ENCODE measurements at regions of chr17 and their contacts with region 1.

Region 1: GRCh38 chr17:60435244-60436167 is 13.2 kb downstream of the CHCT1 start:
- DNase-seq: peak; percentile 21 to 71 (median 59)
- ATAC-seq: peak; percentile 86
- H3K4me3 ChIP-seq: no peak overlapping the region
- H3K4me3 Mint-ChIP-seq: no peak overlapping the region
- H3K27ac ChIP-seq: no peak overlapping the region
- H3K27ac Mint-ChIP-seq: peak overlapping the region in 1 of 9 donors; percentile 29
- H3K4me1 ChIP-seq: no peaks in the 10 kb centered on the region
- H3K4me1 Mint-ChIP-seq: peaks cover 0 to 4% (median 0%) of the 10 kb centered on the region in 7 donors
- H3K27me3 ChIP-seq: no peaks in the 10 kb centered on the region
- H3K27me3 Mint-ChIP-seq: peaks cover 0 to 7% (median 4%) of the 10 kb centered on the region in 5 donors

Region 2: GRCh38 chr17:60036796-60037612 is 398.5 kb before region 1 on chr17:
- CTCF ChIA-PET with region 1: interaction called, 4 read pairs
- POLR2A ChIA-PET with region 1: no interaction called
- intact Hi-C with region 1: loop called in 1 of 2 experiments (anchors 5 kb)
- DNase-seq: peak; percentile 45 to 71 (median 65)
- ATAC-seq: peak; percentile 96
- H3K4me3 ChIP-seq: no peak overlapping the region
- H3K4me3 Mint-ChIP-seq: peak overlapping the region in 1 of 10 donors; percentile 5
- H3K27ac ChIP-seq: no peak overlapping the region
- H3K27ac Mint-ChIP-seq: no peak overlapping the region
- H3K4me1 ChIP-seq: peaks cover 0 to 4% of the 10 kb centered on the region in 2 donors
- H3K4me1 Mint-ChIP-seq: peaks cover 0 to 8% (median 5%) of the 10 kb centered on the region in 7 donors
- H3K27me3 ChIP-seq: no peaks in the 10 kb centered on the region
- H3K27me3 Mint-ChIP-seq: peaks cover 16 to 24% (median 19%) of the 10 kb centered on the region in 5 donors

Region 3: DNA sequence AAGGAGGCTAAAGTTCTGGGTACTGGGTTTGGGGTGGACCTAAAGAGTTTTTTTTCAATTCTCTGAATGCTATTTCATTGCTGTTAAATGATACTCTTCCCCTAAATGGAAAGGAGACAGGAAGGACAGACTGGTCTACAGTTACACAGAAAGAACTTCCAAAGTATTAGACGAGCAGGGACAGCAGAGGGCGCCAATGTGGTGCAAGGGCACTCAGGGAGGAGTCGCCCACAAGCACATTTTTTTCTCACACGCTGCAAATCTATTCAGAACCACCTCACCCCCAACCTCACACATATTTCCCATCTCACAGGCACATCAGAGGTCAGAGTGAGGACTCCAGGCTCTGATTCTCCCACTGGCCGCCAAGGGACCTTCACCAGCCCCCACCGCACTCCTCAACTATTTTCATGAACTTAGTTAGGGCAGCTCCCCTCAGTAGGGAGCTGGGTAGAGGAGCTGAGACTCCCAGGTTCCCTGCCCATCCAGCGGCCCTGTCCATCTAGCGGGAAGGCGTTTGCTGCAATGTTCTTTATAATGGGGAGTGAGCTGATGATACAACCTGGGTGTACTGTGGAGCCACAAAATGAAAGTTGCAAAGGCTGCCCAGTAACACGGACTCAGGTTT is 292.5 kb before region 1 on chr17:
- CTCF ChIA-PET with region 1: interaction called, 4 read pairs
- POLR2A ChIA-PET with region 1: no interaction called
- intact Hi-C with region 1: loop called (anchors 1 kb)
- DNase-seq: peak; percentile 31 to 74 (median 62)
- ATAC-seq: peak; percentile 81
- H3K4me3 ChIP-seq: no peak overlapping the region
- H3K4me3 Mint-ChIP-seq: peak overlapping the region in 4 of 10 donors; percentile 25 to 49 (median 34)
- H3K27ac ChIP-seq: no peak overlapping the region
- H3K27ac Mint-ChIP-seq: no peak overlapping the region
- H3K4me1 ChIP-seq: peaks cover 0 to 5% of the 10 kb centered on the region in 2 donors
- H3K4me1 Mint-ChIP-seq: peaks cover 0 to 33% (median 23%) of the 10 kb centered on the region in 7 donors
- H3K27me3 ChIP-seq: peaks cover 8 to 23% of the 10 kb centered on the region in 2 donors
- H3K27me3 Mint-ChIP-seq: peaks cover 75 to 96% (median 80%) of the 10 kb centered on the region in 5 donors

Region 4: DNA sequence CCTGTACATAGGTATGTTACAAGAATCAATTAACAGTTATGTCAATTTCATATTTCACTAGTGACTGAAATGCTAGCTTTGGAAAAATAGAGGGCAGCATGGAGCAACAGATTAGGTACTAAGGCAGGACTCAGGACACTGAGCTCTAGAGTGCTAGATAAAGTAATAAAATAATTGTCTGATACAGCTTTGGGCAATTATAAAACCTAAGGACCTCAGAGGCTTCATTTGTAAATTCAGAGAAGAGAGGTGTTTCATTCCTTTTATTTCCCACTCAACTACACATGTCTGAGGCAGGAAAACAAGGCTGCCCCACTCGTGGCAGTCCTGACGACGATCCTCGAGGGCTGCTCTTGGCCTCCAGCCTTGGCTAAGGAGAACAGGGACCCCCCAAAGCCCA is 204.3 kb before region 1 on chr17:
- CTCF ChIA-PET with region 1: no interaction called
- POLR2A ChIA-PET with region 1: no interaction called
- intact Hi-C with region 1: loop called (anchors 1 to 5 kb)
- DNase-seq: no peak
- ATAC-seq: no peak
- H3K4me3 ChIP-seq: no peak overlapping the region
- H3K4me3 Mint-ChIP-seq: no peak overlapping the region
- H3K27ac ChIP-seq: no peak overlapping the region
- H3K27ac Mint-ChIP-seq: no peak overlapping the region
- H3K4me1 ChIP-seq: no peaks in the 10 kb centered on the region
- H3K4me1 Mint-ChIP-seq: no peaks in the 10 kb centered on the region
- H3K27me3 ChIP-seq: no peaks in the 10 kb centered on the region
- H3K27me3 Mint-ChIP-seq: no peaks in the 10 kb centered on the region

Region 5: GRCh38 chr17:60392042-60392844 is 43.3 kb before region 1 on chr17 and contains the start of gene USP32:
- CTCF ChIA-PET with region 1: no interaction called
- POLR2A ChIA-PET with region 1: no interaction called
- intact Hi-C with region 1: no loop called
- DNase-seq: peak; percentile 94 to 98 (median 96)
- ATAC-seq: peak; percentile 95
- H3K4me3 ChIP-seq: peak within 1 kb of the TSS; percentile 97
- H3K4me3 Mint-ChIP-seq: peak within 1 kb of the TSS; percentile 93 to 99 (median 96)
- H3K27ac ChIP-seq: peak within 1 kb of the TSS; percentile 92
- H3K27ac Mint-ChIP-seq: peak within 1 kb of the TSS; percentile 92 to 99 (median 97)
- H3K4me1 ChIP-seq: peaks cover 5 to 18% of the 10 kb centered on the region in 2 donors
- H3K4me1 Mint-ChIP-seq: peaks cover 30 to 55% (median 41%) of the 10 kb centered on the region in 7 donors
- H3K27me3 ChIP-seq: no peaks in the 10 kb centered on the region
- H3K27me3 Mint-ChIP-seq: no peaks in the 10 kb centered on the region
- total RNA-seq, gene USP32: 31.6 to 58.1 (median 35.4) TPM

Region 6: GRCh38 chr17:60421273-60421934 is 14.1 kb before region 1 on chr17:
- CTCF ChIA-PET with region 1: interaction called, 3 read pairs
- POLR2A ChIA-PET with region 1: no interaction called
- intact Hi-C with region 1: loop called (anchors 1 kb)
- DNase-seq: peak; percentile 52 to 77 (median 68)
- ATAC-seq: peak; percentile 95
- H3K4me3 ChIP-seq: peak overlapping the region; percentile 63
- H3K4me3 Mint-ChIP-seq: peak overlapping the region; percentile 59 to 88 (median 80)
- H3K27ac ChIP-seq: peak overlapping the region; percentile 38
- H3K27ac Mint-ChIP-seq: peak overlapping the region in 8 of 9 donors; percentile 17 to 82 (median 76)
- H3K4me1 ChIP-seq: peaks cover 4% of the 10 kb centered on the region in 2 donors
- H3K4me1 Mint-ChIP-seq: peaks cover 0 to 11% (median 10%) of the 10 kb centered on the region in 7 donors
- H3K27me3 ChIP-seq: no peaks in the 10 kb centered on the region
- H3K27me3 Mint-ChIP-seq: peaks cover 0 to 7% (median 0%) of the 10 kb centered on the region in 5 donors

Measured in naive thymus-derived CD4-positive, alpha-beta T cell (primary cell).